ENCODE measurements at regions of chrX and their contacts with region 1.

Region 1: DNA sequence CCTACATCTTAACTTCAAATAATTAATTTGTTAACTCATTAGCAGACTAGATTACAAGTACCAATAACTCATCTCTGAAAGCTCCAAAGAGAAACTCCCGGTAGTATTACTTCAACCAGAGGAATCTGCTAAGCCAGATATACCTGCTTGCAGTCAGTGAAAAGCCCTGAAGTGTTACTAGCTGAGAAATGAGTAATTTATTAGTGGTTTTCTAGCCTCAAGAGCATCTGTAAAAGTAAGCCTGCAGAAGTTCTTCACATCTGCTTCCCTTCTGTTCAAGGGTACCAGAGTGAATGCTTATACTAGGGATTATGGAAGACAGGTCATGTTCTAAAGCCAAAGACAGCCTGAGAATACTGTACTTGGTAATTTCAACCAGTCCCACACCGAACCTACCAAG is 34.7 kb downstream of the IRS4 start:
- DNase-seq: no peak
- H3K4me3 ChIP-seq: no peak overlapping the region
- H3K27ac ChIP-seq: no peak overlapping the region
- H3K4me1 ChIP-seq: no peaks in the 10 kb centered on the region
- H3K27me3 ChIP-seq: no peaks in the 10 kb centered on the region

Region 2: DNA sequence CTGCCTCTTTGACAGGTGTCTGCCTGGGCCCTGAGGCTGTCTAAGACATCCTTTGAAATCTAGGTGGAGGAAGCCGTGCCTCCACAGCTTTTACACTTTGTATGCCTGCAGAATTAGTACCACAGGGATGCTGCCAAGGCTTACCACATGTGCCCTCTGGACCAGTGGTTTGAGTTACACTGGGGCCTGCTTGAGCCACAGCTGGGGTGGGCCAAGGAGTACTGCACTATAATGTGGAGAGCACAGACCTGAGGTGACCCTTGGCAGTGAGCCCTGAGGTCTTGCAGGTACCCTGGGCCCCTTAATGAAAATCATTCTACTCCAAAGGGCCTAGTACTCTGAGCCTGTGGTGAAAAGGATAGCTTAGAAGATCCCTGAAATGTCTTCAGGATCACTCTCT is 61.9 kb after region 1 on chrX:
- in situ Hi-C with region 1: no loop called
- DNase-seq: no peak
- H3K4me3 ChIP-seq: no peak overlapping the region
- H3K27ac ChIP-seq: no peak overlapping the region
- H3K4me1 ChIP-seq: no peaks in the 10 kb centered on the region
- H3K27me3 ChIP-seq: no peaks in the 10 kb centered on the region

Region 3: GRCh38 chrX:109384699-109385098 is 683.1 kb after region 1 on chrX:
- in situ Hi-C with region 1: loop called (anchors 25 kb)
- DNase-seq: peak; percentile 49
- H3K4me3 ChIP-seq: no peak overlapping the region
- H3K27ac ChIP-seq: no peak overlapping the region
- H3K4me1 ChIP-seq: no peaks in the 10 kb centered on the region
- H3K27me3 ChIP-seq: no peaks in the 10 kb centered on the region

Measured in GM23248 (cell line).